CD8-positive, alpha-beta T cell (primary cell): ENCODE measurements at regions of chr10 and their contacts with region 1.

Region 1: GRCh38 chr10:89701238-89702120 is at the start of gene KIF20B:
- DNase-seq: peak; percentile 90 to 97 (median 94)
- ATAC-seq: peak; percentile 95
- H3K4me3 ChIP-seq: peak within 1 kb of the TSS; percentile 85 to 86
- H3K4me3 Mint-ChIP-seq: peak within 1 kb of the TSS; percentile 98
- H3K27ac ChIP-seq: peak within 1 kb of the TSS; percentile 77 to 86
- H3K27ac Mint-ChIP-seq: peak within 1 kb of the TSS; percentile 99
- H3K4me1 ChIP-seq: peaks cover 14% of the 10 kb centered on the region
- H3K4me1 Mint-ChIP-seq: peaks cover 36% of the 10 kb centered on the region
- H3K27me3 ChIP-seq: no peaks in the 10 kb centered on the region
- H3K27me3 Mint-ChIP-seq: no peaks in the 10 kb centered on the region
- CTCF ChIP-seq: peak; percentile 14
- total RNA-seq, gene KIF20B: 23.1 to 26.3 TPM

Region 2: DNA sequence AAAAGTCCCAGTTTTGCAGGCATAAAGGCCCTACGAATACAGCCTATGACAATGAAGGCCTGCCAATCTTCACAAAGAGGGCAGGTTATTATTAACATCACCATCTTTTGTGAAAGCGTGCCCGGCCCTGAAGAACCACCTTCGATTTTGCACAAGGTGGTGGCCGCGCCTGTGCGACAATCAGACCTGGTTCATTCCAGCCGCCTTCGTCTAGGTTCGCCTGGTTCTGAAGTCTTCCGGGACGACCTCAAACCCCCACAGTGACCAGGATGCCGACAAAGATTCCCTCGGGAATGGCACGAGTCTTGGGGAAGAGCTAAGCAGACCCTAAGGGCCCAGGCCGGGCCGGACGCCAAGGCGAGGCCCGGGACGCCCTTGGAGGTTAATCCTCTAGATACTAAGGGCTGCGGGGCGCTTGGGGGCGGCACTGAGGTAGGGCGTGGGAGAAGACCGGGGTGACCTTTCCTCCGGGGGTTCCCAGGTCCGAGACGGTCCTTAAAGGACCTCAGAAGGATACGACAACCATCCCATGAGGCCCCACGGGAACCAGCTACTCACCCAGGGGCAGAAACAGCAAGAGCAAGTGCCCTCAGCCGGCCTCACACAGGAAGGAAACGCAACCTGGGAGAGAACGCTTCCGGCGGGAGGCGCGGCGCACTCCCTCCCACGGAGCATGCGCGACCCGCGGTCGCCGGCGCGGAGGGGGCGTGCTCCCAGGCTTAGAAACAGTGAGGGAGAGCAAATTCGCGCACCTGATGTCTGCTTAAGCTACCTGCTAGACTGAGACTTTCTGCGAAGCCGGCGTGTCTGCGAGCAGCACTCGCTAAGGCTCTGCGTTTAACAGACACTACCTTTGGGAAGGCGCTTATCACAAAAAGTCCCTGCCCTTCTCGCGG is 1883.6 kb before region 1 on chr10 and contains the start of gene ATAD1:
- CTCF ChIA-PET with region 1: no interaction called
- POLR2A ChIA-PET with region 1: no interaction called
- intact Hi-C with region 1: loop called in 1 of 2 experiments (anchors 10 kb)
- DNase-seq: peak; percentile 79 to 96 (median 88)
- ATAC-seq: peak; percentile 84
- H3K4me3 ChIP-seq: peak within 1 kb of the TSS; percentile 83 to 87
- H3K4me3 Mint-ChIP-seq: peak within 1 kb of the TSS; percentile 94
- H3K27ac ChIP-seq: peak within 1 kb of the TSS; percentile 89 to 95
- H3K27ac Mint-ChIP-seq: peak within 1 kb of the TSS; percentile 100
- H3K4me1 ChIP-seq: peaks cover 26% of the 10 kb centered on the region
- H3K4me1 Mint-ChIP-seq: peaks cover 45% of the 10 kb centered on the region
- H3K27me3 ChIP-seq: no peaks in the 10 kb centered on the region
- H3K27me3 Mint-ChIP-seq: no peaks in the 10 kb centered on the region
- CTCF ChIP-seq: peak; percentile 20
- total RNA-seq, gene ATAD1: 36.9 to 39.0 TPM

Region 3: DNA sequence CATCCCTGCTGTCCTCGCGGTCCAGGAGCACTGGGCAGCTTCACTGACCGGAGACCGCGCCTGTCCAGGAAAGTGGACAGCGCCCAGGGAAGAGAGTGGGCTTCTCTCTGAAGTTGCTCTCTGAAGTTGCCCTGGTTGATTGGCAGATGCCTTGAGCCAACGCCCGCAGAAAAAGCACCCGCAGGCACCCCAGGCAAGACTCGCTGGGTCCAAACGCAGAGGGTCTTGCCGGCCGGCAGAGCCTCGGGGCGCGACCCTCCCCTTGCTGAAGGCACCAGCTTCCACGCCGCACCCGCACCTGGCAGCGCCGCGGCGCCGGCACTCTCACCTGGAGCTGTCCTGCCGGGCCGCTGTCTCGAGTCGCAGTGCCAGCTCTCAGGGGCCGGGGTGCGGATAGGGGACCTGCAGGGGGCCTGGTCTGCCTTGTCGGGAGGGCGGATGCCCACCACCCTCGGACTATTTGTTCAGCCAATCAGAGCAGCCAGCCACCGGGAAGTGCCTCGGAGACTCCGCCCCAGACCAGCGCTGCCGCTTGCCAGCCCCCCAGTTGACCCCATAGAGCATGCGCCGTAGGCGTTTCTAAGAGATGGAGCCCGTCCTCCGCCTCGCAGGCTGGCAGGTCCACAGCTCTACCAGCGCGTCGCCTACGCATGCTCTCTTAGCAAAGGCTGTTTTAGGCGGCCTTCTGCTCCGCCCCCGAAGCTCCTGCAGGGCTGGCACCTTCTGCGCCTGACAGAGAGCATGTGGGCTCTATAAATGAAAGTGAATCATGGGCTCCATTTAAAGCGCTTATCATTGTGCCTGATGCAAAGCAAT is 449.9 kb before region 1 on chr10 and contains the start of gene LIPA:
- CTCF ChIA-PET with region 1: interaction called, 3 read pairs
- POLR2A ChIA-PET with region 1: interaction called, 4 read pairs
- intact Hi-C with region 1: loop called (anchors 2 kb)
- DNase-seq: peak; percentile 93 to 99 (median 96)
- ATAC-seq: peak; percentile 96
- H3K4me3 ChIP-seq: peak within 1 kb of the TSS; percentile 82 to 84
- H3K4me3 Mint-ChIP-seq: peak within 1 kb of the TSS; percentile 90
- H3K27ac ChIP-seq: peak within 1 kb of the TSS; percentile 63 to 65
- H3K27ac Mint-ChIP-seq: peak within 1 kb of the TSS; percentile 88
- H3K4me1 ChIP-seq: peaks cover 12% of the 10 kb centered on the region
- H3K4me1 Mint-ChIP-seq: peaks cover 23% of the 10 kb centered on the region
- H3K27me3 ChIP-seq: no peaks in the 10 kb centered on the region
- H3K27me3 Mint-ChIP-seq: peaks cover 2% of the 10 kb centered on the region
- CTCF ChIP-seq: no peak
- total RNA-seq, gene LIPA: 9.7 to 12.1 TPM

Region 4: DNA sequence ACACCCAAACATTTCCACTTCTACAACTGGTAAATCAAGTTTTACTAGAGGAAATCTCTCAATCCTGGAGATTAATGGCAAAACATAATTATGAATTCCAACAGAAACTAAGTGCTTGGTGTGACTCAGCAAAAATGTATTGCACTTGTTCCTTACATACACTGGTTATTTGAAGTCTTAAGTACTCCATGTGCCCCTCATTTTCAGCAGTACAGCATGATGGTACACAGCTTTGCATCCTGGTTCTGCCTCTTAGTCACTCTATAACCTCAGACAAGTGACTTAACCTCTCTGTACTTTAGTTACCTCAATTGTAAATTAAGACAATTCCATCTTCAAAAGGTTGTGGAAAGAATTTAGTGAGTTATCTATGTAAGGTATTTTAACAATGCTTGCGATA is 179.0 kb before region 1 on chr10:
- CTCF ChIA-PET with region 1: no interaction called
- POLR2A ChIA-PET with region 1: no interaction called
- intact Hi-C with region 1: no loop called
- DNase-seq: no peak
- ATAC-seq: no peak
- H3K4me3 ChIP-seq: no peak overlapping the region
- H3K4me3 Mint-ChIP-seq: no peak overlapping the region
- H3K27ac ChIP-seq: no peak overlapping the region
- H3K27ac Mint-ChIP-seq: no peak overlapping the region
- H3K4me1 ChIP-seq: no peaks in the 10 kb centered on the region
- H3K4me1 Mint-ChIP-seq: no peaks in the 10 kb centered on the region
- H3K27me3 ChIP-seq: no peaks in the 10 kb centered on the region
- H3K27me3 Mint-ChIP-seq: peaks cover 3% of the 10 kb centered on the region
- CTCF ChIP-seq: no peak

Region 5: DNA sequence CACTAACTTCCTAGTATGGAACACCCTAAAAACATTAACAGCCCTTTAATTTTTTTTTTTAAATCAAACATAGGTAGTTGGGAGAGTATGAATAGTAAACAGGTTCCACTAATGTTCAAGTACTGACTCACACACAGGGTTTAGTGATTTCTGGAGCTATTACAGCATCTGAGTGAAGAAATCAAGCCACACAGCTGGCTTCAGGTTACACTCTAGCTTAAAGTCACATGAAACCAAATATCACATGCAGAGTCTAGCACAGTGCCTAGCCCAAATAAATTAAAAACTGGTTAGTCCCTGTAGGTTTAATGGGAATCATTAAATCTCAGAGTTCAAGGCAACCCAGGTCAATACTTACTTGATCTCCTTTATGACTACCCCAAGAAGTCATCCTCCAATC is 68.0 kb before region 1 on chr10:
- CTCF ChIA-PET with region 1: no interaction called
- POLR2A ChIA-PET with region 1: no interaction called
- intact Hi-C with region 1: no loop called
- DNase-seq: no peak
- ATAC-seq: no peak
- H3K4me3 ChIP-seq: no peak overlapping the region
- H3K4me3 Mint-ChIP-seq: no peak overlapping the region
- H3K27ac ChIP-seq: no peak overlapping the region
- H3K27ac Mint-ChIP-seq: no peak overlapping the region
- H3K4me1 ChIP-seq: no peaks in the 10 kb centered on the region
- H3K4me1 Mint-ChIP-seq: no peaks in the 10 kb centered on the region
- H3K27me3 ChIP-seq: no peaks in the 10 kb centered on the region
- H3K27me3 Mint-ChIP-seq: no peaks in the 10 kb centered on the region
- CTCF ChIP-seq: no peak

Region 6: DNA sequence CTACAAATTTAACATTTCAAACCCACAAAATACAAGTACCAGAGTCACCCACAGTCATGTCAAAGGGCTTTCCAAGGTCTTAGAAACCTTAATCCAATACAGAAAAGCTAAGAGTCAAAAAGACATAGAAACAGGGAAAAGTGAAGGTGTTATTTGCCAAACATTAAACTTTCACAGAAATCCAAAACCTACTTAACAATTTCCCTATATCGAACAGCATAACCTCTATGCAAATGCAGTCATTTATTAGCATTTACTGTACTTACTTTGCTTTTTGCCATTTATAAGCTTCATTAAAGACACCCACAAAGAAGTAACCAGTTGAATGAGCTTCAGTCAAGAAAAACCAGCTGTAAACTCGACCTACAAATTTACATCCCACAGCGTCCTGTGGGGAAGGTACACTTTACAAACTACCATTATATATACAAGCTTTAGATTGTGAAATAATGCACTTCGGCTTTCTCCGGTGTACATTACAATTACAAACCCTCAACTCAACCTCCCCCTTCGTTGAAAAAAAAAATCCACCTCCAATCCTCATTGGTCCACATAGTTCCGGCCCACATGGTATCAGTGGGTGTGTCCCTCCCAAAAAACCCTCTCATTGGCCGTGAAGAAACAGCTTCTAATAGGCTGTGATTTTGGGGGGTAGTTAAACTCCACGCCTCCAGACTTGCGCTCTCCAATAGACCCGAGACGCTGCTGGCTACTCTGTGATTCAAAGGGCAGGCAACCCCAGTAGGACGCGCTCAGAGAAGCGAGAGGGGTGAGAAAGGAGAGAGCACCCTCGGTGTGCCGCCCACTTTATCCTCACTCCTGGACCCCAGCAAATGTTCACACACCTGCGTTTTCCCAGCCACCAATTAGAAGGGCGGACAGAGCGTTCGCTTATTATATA is 57.8 kb before region 1 on chr10:
- CTCF ChIA-PET with region 1: no interaction called
- POLR2A ChIA-PET with region 1: interaction called, 7 read pairs
- intact Hi-C with region 1: loop called (anchors 1 kb)
- DNase-seq: peak in 8 of 9 experiments; percentile 25 to 90 (median 56)
- ATAC-seq: peak; percentile 91
- H3K4me3 ChIP-seq: peak overlapping the region; percentile 45 to 57
- H3K4me3 Mint-ChIP-seq: no peak overlapping the region
- H3K27ac ChIP-seq: no peak overlapping the region
- H3K27ac Mint-ChIP-seq: no peak overlapping the region
- H3K4me1 ChIP-seq: peaks cover 9% of the 10 kb centered on the region
- H3K4me1 Mint-ChIP-seq: peaks cover 8% of the 10 kb centered on the region
- H3K27me3 ChIP-seq: no peaks in the 10 kb centered on the region
- H3K27me3 Mint-ChIP-seq: peaks cover 13% of the 10 kb centered on the region
- CTCF ChIP-seq: no peak

Region 7: GRCh38 chr10:89659143-89660131 is 42.0 kb before region 1 on chr10:
- CTCF ChIA-PET with region 1: no interaction called
- POLR2A ChIA-PET with region 1: no interaction called
- intact Hi-C with region 1: no loop called
- DNase-seq: no peak
- ATAC-seq: no peak
- H3K4me3 ChIP-seq: no peak overlapping the region
- H3K4me3 Mint-ChIP-seq: no peak overlapping the region
- H3K27ac ChIP-seq: no peak overlapping the region
- H3K27ac Mint-ChIP-seq: no peak overlapping the region
- H3K4me1 ChIP-seq: no peaks in the 10 kb centered on the region
- H3K4me1 Mint-ChIP-seq: no peaks in the 10 kb centered on the region
- H3K27me3 ChIP-seq: no peaks in the 10 kb centered on the region
- H3K27me3 Mint-ChIP-seq: peaks cover 7% of the 10 kb centered on the region
- CTCF ChIP-seq: no peak

Region 8: GRCh38 chr10:89773081-89773480 is 71.6 kb after region 1 on chr10:
- CTCF ChIA-PET with region 1: no interaction called
- POLR2A ChIA-PET with region 1: no interaction called
- intact Hi-C with region 1: no loop called
- DNase-seq: no peak
- ATAC-seq: no peak
- H3K4me3 ChIP-seq: no peak overlapping the region
- H3K4me3 Mint-ChIP-seq: no peak overlapping the region
- H3K27ac ChIP-seq: no peak overlapping the region
- H3K27ac Mint-ChIP-seq: no peak overlapping the region
- H3K4me1 ChIP-seq: no peaks in the 10 kb centered on the region
- H3K4me1 Mint-ChIP-seq: no peaks in the 10 kb centered on the region
- H3K27me3 ChIP-seq: no peaks in the 10 kb centered on the region
- H3K27me3 Mint-ChIP-seq: no peaks in the 10 kb centered on the region
- CTCF ChIP-seq: no peak

Region 9: GRCh38 chr10:91220194-91220953 is 1518.9 kb after region 1 on chr10 and contains the start of gene PCGF5:
- CTCF ChIA-PET with region 1: no interaction called
- POLR2A ChIA-PET with region 1: no interaction called
- intact Hi-C with region 1: loop called in 1 of 2 experiments (anchors 5 kb)
- DNase-seq: peak; percentile 87 to 97 (median 91)
- ATAC-seq: peak; percentile 94
- H3K4me3 ChIP-seq: peak within 1 kb of the TSS; percentile 66 to 80
- H3K4me3 Mint-ChIP-seq: peak within 1 kb of the TSS; percentile 89
- H3K27ac ChIP-seq: peak within 1 kb of the TSS; percentile 74 to 76
- H3K27ac Mint-ChIP-seq: peak within 1 kb of the TSS; percentile 91
- H3K4me1 ChIP-seq: peaks cover 32% of the 10 kb centered on the region
- H3K4me1 Mint-ChIP-seq: peaks cover 51% of the 10 kb centered on the region
- H3K27me3 ChIP-seq: no peaks in the 10 kb centered on the region
- H3K27me3 Mint-ChIP-seq: no peaks in the 10 kb centered on the region
- CTCF ChIP-seq: no peak
- total RNA-seq, gene PCGF5: 67.5 to 70.7 TPM